Activated T-helper 1 cell treated with anti-CD3 and anti-CD28 coated beads, Interleukin-12 subunit alpha, Interleukin-12 subunit beta, Interleukin-2, Interleukin-4 antibody, amounts not matched to agents 30 ng/mL and 10 ng/mL and 1 ng/mL, durations not matched to agents 14 hours and 24 hours and 36 hours (primary cell): ENCODE measurements at regions of chr6 and their contacts with region 1.

Region 1: GRCh38 chr6:158762787-158763433 is 56.3 kb downstream of the EZR start:
- DNase-seq: no peak
- H3K4me3 Mint-ChIP-seq: no peak overlapping the region
- H3K27ac Mint-ChIP-seq: peak overlapping the region; percentile 31
- H3K4me1 Mint-ChIP-seq: no peaks in the 10 kb centered on the region
- H3K27me3 Mint-ChIP-seq: no peaks in the 10 kb centered on the region

Region 2: DNA sequence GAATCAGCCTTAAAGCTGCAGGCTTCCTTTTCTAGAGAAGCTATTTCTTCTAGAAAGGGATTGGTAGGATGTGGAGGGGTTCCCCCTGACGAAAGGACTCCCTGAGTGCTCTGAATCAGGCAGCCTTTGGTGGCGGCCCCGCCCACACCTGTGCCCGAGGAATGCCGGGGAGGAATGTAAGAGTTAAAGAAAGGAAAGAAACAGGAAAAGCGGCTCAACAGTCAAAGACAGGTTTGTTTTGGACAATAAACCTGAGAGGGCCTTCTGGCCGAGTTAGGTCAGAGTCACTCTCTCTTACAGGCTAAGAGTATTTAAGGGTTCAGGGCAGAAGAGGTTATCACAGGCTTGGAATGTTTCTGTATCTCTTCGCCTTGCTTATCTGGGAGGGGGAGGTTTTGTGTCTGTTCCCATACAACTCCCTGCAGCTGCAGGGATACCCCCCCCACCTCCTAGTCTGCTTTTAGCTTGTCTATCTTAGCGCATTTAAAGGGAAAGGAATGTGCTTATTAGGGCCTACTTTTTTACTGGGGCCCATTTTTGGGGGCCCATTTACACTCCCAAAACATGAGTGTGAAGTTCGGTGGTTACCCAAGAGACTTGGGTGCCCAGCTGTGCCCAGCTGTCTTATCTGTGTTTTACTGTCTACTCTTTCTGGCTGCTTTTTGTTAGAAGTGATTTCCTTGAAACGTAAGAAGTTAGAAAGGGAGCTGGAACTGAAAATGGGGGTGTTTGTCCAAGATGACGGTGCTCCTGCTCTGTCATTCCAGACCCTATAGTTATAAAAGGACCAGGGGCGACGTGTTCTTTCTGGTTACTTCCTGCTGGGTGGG is 151.2 kb before region 1 on chr6:
- intact Hi-C with region 1: no loop called
- DNase-seq: no peak
- H3K4me3 Mint-ChIP-seq: no peak overlapping the region
- H3K27ac Mint-ChIP-seq: no peak overlapping the region
- H3K4me1 Mint-ChIP-seq: no peaks in the 10 kb centered on the region
- H3K27me3 Mint-ChIP-seq: no peaks in the 10 kb centered on the region

Region 3: DNA sequence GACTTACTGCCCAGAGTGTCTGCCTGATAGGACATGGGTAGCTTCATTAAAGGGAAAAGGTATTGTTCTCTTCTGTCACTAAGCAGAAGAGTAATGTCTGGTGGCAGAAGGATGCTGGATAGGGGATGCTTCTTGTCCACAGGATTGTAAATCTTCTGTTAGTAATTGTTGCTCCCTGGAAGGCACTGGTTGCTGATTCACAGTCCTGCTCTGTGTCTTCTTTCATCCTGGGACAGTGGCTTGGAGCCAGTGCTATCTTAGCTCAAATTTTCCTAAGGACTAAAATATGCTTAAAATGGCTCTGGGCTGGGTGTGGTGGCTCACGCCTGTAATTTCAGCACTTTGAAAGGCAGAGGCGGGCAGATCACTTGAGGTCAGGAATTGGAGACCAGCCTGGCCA is 65.1 kb before region 1 on chr6:
- intact Hi-C with region 1: no loop called
- DNase-seq: no peak
- H3K4me3 Mint-ChIP-seq: no peak overlapping the region
- H3K27ac Mint-ChIP-seq: peak overlapping the region; percentile 34
- H3K4me1 Mint-ChIP-seq: peaks cover 29% of the 10 kb centered on the region
- H3K27me3 Mint-ChIP-seq: no peaks in the 10 kb centered on the region

Region 4: GRCh38 chr6:158772851-158773371 is 10.0 kb after region 1 on chr6:
- intact Hi-C with region 1: loop called (anchors 1 kb)
- DNase-seq: no peak
- H3K4me3 Mint-ChIP-seq: no peak overlapping the region
- H3K27ac Mint-ChIP-seq: peak overlapping the region; percentile 29
- H3K4me1 Mint-ChIP-seq: peaks cover 67% of the 10 kb centered on the region
- H3K27me3 Mint-ChIP-seq: no peaks in the 10 kb centered on the region

Region 5: DNA sequence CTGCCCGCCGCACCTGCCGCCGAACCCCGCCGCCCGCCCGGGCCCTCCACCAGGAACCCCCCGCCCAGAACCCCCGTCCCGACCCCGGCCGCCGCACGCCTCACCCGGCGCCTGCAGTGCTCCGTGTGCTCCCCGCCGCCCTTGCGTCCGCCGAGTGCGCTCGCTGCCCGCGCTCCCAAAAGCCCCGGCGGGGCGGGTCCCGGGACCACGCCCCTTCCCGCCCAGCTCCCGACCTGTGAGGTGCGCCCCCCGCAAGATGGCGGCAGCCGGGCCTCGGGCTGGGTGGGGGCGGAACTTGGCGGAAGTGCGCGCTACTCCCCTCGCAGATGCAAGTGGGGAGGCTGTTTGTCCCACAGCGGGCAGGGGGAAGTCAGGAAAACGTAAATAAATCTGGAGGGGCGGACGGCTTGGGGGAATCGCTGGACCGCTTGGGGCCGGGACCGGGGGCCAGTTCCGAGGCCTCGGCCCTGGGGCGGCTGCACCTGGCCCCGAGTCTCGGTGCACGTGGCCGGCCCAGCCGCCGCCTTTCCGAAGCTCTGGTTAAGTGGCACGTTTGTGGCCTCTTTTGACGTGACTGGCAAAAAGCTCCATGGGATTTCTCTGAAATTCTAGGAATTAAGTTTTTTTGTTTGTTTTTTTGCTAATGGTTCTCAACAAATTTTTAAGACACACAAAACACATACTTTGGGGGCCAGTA is 56.5 kb after region 1 on chr6 and contains the start of gene EZR:
- intact Hi-C with region 1: no loop called
- DNase-seq: peak; percentile 71
- H3K4me3 Mint-ChIP-seq: peak within 1 kb of the TSS; percentile 79
- H3K27ac Mint-ChIP-seq: peak within 1 kb of the TSS; percentile 86
- H3K4me1 Mint-ChIP-seq: peaks cover 55% of the 10 kb centered on the region
- H3K27me3 Mint-ChIP-seq: no peaks in the 10 kb centered on the region
- total RNA-seq, gene EZR: 205 and 206 TPM in 2 replicates

Region 6: GRCh38 chr6:158835616-158836221 is 72.8 kb after region 1 on chr6:
- intact Hi-C with region 1: no loop called
- DNase-seq: no peak
- H3K4me3 Mint-ChIP-seq: no peak overlapping the region
- H3K27ac Mint-ChIP-seq: no peak overlapping the region
- H3K4me1 Mint-ChIP-seq: no peaks in the 10 kb centered on the region
- H3K27me3 Mint-ChIP-seq: peaks cover 6% of the 10 kb centered on the region